Breast epithelium (tissue), 4 donors: ENCODE measurements at regions of chr11 and their contacts with region 1.

Region 1: DNA sequence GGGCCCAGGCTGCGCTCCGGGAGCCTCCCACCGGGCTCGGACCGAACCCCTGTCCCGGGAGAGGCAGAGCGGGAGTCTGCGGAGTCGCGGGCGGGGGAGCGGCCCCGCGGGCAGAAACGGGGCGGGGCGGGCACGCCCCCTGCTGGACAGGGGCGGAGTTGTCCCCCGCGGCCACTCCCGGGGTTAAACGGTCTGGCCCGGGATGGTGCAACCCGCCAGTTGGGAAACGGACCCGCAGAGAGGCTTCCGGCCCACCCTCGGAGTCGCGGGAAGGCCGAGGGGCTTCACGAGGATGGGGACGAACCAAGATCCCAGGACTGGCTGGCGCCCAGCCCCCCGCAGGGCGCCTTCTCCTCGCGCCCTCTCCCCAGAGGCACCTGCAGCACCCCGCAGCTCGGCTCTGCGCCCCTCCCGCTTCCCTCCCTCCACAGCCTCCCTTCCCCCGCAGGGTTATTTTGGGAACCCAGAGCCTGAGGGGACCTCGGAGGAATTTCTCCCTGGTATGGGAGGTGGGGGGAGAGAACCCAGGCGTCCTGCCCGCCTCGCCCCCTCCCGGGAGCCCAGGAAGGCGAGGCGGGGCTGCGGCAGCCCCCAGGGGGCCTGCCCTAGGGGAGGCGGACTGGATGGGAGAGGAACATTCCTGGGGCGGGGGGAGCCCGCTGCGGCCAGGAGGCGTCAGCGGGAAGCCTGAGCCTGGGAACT is 902 bp downstream of the RASGRP2 start:
- DNase-seq: no peak
- H3K4me3 ChIP-seq: peak overlapping the region; percentile 52 to 73 (median 58)
- H3K27ac ChIP-seq: peak overlapping the region; percentile 48 to 92
- H3K4me1 ChIP-seq: peaks cover 15 to 17% of the 10 kb centered on the region in 2 donors
- H3K27me3 ChIP-seq: peaks cover 0 to 22% of the 10 kb centered on the region in 2 donors
- CTCF ChIP-seq: peak; percentile 46 to 75 (median 49)
- POLR2A ChIP-seq: peak; percentile 17

Region 2: DNA sequence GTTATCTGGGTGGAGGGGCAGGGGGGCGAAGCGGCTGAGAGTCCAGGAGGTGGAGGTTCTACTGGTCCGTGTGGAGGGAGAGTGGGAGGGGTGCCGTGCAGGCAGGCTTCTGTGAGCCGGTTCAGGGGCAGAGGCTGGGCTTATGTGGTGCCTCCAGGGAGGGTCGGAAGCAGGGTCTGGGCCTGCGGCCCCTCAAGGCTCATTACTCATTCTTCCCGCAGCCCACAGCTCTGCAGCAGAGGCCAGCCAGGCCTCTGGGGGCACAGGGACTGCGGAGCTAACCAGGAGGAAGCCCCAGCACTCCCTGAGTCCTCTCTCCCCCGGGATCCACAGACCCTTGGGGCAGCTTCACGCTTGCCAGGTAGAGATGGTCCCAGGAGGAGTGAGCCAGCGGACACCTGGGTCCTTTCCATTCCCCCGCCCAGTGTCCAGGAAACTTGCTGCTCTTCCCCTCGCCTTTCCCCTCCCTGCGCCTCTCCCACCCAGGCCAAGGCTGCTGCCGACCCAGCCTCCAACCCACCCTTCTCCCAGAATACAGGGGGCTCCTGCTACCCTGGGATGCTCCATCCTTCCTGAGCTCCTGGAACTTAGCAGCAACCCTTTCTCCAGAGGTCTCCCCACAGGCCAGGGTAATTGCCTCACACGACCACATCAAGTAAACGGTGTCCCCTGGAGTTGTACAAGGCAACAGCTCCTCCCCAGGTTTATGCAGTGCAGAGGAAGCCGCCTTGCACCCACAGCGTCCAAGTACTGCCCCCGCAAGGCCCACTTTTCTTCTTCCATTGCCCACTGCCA is 26.4 kb before region 1 on chr11:
- intact Hi-C with region 1: loop called (anchors 1 kb)
- DNase-seq: no peak
- H3K4me3 ChIP-seq: no peak overlapping the region
- H3K27ac ChIP-seq: no peak overlapping the region
- H3K4me1 ChIP-seq: peaks cover 0 to 3% of the 10 kb centered on the region in 2 donors
- H3K27me3 ChIP-seq: peaks cover 4 to 97% of the 10 kb centered on the region in 2 donors
- CTCF ChIP-seq: no peak
- POLR2A ChIP-seq: no peak